ENCODE measurements at regions of chr22 and their contacts with region 1.

Region 1: GRCh38 chr22:50696797-50697561 is 24.4 kb downstream of the SHANK3 start:
- DNase-seq: peak; percentile 8 to 55 (median 45)
- ATAC-seq: peak; percentile 72
- H3K4me3 ChIP-seq: no peak overlapping the region
- H3K27ac ChIP-seq: no peak overlapping the region
- H3K4me1 ChIP-seq: peaks cover 0 to 13% of the 10 kb centered on the region in 2 experiments; a peak in 1 of 5 replicates
- H3K27me3 ChIP-seq: peaks cover 6 to 21% of the 10 kb centered on the region in 2 experiments; a peak in 4 of 5 replicates
- CTCF ChIP-seq: peak in 2 of 3 experiments; percentile 30 to 48; a peak in 2 of 6 replicates
- EP300 ChIP-seq: no peak
- POLR2A ChIP-seq: no peak
- RAD21 ChIP-seq: peak in 1 of 2 experiments; percentile 24; a peak in 1 of 4 replicates

Region 2: DNA sequence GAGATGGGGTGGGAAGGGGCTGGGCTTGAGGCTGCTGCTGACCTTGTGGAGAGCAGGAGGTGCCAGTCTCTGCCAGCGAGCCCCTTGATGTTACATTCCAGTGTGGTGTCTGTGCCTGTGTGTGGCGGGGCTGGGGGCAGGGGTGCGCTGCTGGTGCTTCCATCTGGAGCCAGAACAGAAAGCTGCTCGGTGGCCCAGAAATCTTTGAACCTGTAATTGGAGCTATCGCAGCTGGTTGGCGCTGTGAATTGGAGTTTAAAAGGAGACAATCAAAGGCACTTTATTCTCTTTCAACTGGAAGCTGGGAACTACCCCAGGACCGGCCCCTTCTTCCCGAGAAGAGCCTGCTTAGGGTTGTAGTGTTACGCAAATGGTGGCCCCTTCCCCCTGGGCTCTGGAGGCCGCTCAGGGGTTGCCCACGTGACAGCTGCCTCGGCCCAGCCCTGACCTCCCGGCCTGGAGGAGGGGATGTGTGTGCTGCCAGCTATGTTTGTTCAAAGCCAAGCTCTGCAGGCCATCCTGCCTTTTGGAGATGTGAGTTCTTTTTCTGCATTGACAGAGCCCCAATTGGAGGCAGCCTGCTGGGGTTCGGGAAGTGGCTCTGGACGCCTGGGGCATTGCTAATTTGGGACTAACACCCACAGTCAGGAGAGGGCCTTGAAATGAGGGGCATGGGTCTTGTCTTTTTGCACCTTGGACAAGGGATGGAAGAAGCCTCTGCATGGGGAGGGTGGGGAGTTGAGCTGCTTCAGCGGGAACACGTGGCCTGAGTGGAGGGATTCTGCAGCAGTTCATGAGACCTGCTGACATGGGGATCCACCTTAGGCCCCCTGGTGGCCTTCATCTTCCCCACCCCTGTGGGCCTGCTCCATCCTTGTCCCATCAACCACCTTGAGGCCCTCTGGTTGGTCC is 55.0 kb before region 1 on chr22:
- CTCF ChIA-PET with region 1: no interaction called
- POLR2A ChIA-PET with region 1: interaction called, 5 read pairs
- in situ Hi-C with region 1: loop called (anchors 5 kb)
- intact Hi-C with region 1: no loop called
- DNase-seq: peak in 3 of 4 experiments; percentile 26 to 42 (median 32)
- ATAC-seq: peak; percentile 76
- H3K4me3 ChIP-seq: no peak overlapping the region
- H3K27ac ChIP-seq: no peak overlapping the region
- H3K4me1 ChIP-seq: peaks cover 0 to 6% of the 10 kb centered on the region in 2 experiments; a peak in 2 of 5 replicates
- H3K27me3 ChIP-seq: peaks cover 5 to 42% of the 10 kb centered on the region in 2 experiments
- CTCF ChIP-seq: peak; percentile 24 to 35 (median 25); a peak in 3 of 6 replicates
- EP300 ChIP-seq: no peak
- POLR2A ChIP-seq: no peak
- RAD21 ChIP-seq: no peak

Measured in K562 (cell line).